WTC11 (cell line): ENCODE measurements at regions of chr20 and their contacts with region 1.

Region 1: GRCh38 chr20:62386383-62387218 is at the start of gene RPS21:
- DNase-seq: peak; percentile 89
- ATAC-seq: peak; percentile 48
- H3K4me3 Mint-ChIP-seq: peak within 1 kb of the TSS; percentile 89
- H3K27ac Mint-ChIP-seq: peak within 1 kb of the TSS; percentile 77
- H3K4me1 Mint-ChIP-seq: peaks cover 30% of the 10 kb centered on the region
- H3K27me3 Mint-ChIP-seq: no peaks in the 10 kb centered on the region
- CTCF ChIP-seq: no peak
- total RNA-seq, gene RPS21: 2,016 to 2,119 TPM (median 2,047 TPM) in 3 replicates

Region 2: GRCh38 chr20:62227977-62228958 is 158.3 kb before region 1 on chr20:
- CTCF ChIA-PET with region 1: no interaction called
- POLR2A ChIA-PET with region 1: no interaction called
- DNase-seq: peak; percentile 59
- ATAC-seq: peak; percentile 95
- H3K4me3 Mint-ChIP-seq: no peak overlapping the region
- H3K27ac Mint-ChIP-seq: no peak overlapping the region
- H3K4me1 Mint-ChIP-seq: peaks cover 3% of the 10 kb centered on the region
- H3K27me3 Mint-ChIP-seq: peaks cover 4% of the 10 kb centered on the region; the same call in 1 of the 2 replicates
- CTCF ChIP-seq: no peak

Region 3: DNA sequence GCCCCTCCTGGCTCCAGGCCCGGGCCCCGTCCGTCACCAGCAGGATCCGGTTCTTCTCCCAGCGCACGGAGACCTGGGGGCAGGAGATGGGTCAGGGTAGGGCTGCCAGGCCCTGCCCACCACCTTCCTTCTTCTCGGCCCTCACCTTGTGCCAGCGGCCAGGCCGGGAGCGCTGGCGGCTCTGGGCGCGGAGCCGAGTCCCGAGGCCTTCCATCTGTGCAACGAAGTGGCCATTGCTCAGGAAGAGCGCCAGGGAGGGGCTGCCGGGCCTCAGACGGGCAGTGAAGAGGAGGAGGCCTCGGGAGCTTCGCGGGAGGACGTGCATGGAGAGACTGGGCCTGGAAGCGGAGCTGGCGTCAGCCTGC is 75.9 kb before region 1 on chr20:
- CTCF ChIA-PET with region 1: interaction called, 10 read pairs
- POLR2A ChIA-PET with region 1: no interaction called
- DNase-seq: no peak
- ATAC-seq: no peak
- H3K4me3 Mint-ChIP-seq: no peak overlapping the region
- H3K27ac Mint-ChIP-seq: no peak overlapping the region
- H3K4me1 Mint-ChIP-seq: no peaks in the 10 kb centered on the region
- H3K27me3 Mint-ChIP-seq: no peaks in the 10 kb centered on the region
- CTCF ChIP-seq: no peak

Region 4: GRCh38 chr20:62357187-62357667 is 29.4 kb before region 1 on chr20:
- CTCF ChIA-PET with region 1: interaction called, 137 read pairs
- POLR2A ChIA-PET with region 1: interaction called, 8 read pairs
- DNase-seq: no peak
- ATAC-seq: no peak
- H3K4me3 Mint-ChIP-seq: no peak overlapping the region
- H3K27ac Mint-ChIP-seq: no peak overlapping the region
- H3K4me1 Mint-ChIP-seq: peaks cover 21% of the 10 kb centered on the region
- H3K27me3 Mint-ChIP-seq: no peaks in the 10 kb centered on the region
- CTCF ChIP-seq: no peak

Region 5: GRCh38 chr20:62401331-62401779 is 14.8 kb after region 1 on chr20:
- CTCF ChIA-PET with region 1: interaction called, 17 read pairs
- POLR2A ChIA-PET with region 1: interaction called, 5 read pairs
- DNase-seq: peak; percentile 87
- ATAC-seq: peak; percentile 72
- H3K4me3 Mint-ChIP-seq: no peak overlapping the region
- H3K27ac Mint-ChIP-seq: no peak overlapping the region
- H3K4me1 Mint-ChIP-seq: peaks cover 15% of the 10 kb centered on the region
- H3K27me3 Mint-ChIP-seq: no peaks in the 10 kb centered on the region
- CTCF ChIP-seq: peak; percentile 64